Colonic mucosa (tissue), 4 donors: ENCODE measurements at regions of chr15 and their contacts with region 1.

Region 1: DNA sequence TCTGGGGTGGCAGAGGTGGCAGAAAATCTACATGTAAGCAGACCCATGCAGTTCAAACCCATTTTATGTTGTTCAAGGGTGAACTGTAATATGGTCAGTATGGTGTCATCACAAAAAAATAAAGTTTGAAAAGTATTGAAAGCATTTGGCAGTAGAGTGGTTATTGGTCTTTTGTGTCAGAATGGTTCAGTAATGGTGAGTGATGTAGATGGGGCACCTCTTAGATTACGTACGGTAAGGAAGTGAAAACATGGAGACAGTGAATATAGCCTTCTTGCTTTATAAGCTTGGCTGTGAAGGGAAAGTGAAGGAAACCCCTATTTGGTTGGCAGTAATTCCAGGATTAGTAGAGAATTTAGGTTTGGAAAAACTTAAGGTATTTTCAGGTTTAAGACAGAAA is 17.2 kb upstream of the CCNB2 start:
- DNase-seq: no peak
- H3K4me3 ChIP-seq: no peak overlapping the region
- H3K27ac ChIP-seq: no peak overlapping the region
- H3K4me1 ChIP-seq: no peaks in the 10 kb centered on the region
- H3K27me3 ChIP-seq: no peaks in the 10 kb centered on the region
- CTCF ChIP-seq: no peak

Region 2: GRCh38 chr15:59158701-59159034 is 70.9 kb after region 1 on chr15:
- intact Hi-C with region 1: loop called (anchors 10 kb)
- DNase-seq: no peak
- H3K4me3 ChIP-seq: no peak overlapping the region
- H3K27ac ChIP-seq: no peak overlapping the region
- H3K4me1 ChIP-seq: no peaks in the 10 kb centered on the region
- H3K27me3 ChIP-seq: no peaks in the 10 kb centered on the region
- CTCF ChIP-seq: no peak